ENCODE measurements at regions of chr10 and their contacts with region 1.

Region 1: GRCh38 chr10:128011175-128011979 is 104.5 kb downstream of the PTPRE start:
- DNase-seq: no peak
- H3K4me3 ChIP-seq: no peak overlapping the region
- CTCF ChIP-seq: peak; percentile 96

Region 2: GRCh38 chr10:127906548-127907377 is 104.6 kb before region 1 on chr10 and contains the start of gene PTPRE:
- CTCF ChIA-PET with region 1: interaction called, 24 read pairs
- POLR2A ChIA-PET with region 1: no interaction called
- DNase-seq: no peak
- H3K4me3 ChIP-seq: no peak within 1 kb of the TSS
- CTCF ChIP-seq: peak; percentile 44

Region 3: GRCh38 chr10:127990846-127991542 is 20.4 kb before region 1 on chr10:
- CTCF ChIA-PET with region 1: interaction called, 13 read pairs
- POLR2A ChIA-PET with region 1: no interaction called
- DNase-seq: peak; percentile 17
- H3K4me3 ChIP-seq: no peak overlapping the region
- CTCF ChIP-seq: no peak

Region 4: DNA sequence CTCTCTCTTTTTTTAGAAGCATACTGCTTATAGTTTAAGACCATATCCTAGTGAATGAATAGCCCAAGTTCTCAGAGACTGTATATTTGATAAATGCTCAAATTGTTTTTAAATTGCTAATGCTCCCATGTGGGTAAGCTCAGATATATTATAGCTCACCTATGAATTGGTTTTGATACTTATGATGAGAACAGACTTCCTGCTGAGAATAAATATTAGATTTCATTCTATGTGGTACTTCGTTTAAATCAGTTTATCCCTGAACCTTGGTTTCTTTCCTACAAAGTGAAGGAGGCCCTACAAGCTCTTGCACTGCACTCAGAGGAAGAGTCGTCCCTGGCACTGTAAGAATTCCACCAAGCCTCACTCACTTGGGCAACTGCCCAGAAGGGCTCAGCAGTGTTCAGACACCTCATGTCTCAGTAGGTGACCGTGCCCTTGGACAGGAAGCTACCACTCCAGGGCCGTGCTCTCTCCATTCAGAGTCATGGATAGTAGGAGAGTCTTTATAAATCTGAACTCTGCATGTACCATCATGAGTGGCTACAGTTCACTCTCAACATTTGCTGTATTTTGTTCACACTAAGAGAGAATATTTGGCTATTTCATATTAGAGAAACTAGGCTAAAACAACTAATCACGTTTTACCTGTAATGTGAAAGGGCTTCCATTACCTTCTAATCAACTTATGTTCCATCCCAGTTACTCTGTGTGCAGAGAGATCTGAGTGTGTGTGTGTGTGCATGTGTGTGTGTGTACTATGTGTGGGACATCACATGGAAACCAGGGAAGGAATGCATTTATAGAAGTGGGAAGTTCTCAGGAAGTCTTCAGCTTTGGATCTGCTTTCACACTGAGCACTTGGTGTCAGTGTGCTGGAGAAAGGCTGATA is 10.7 kb before region 1 on chr10:
- CTCF ChIA-PET with region 1: interaction called, 18 read pairs
- POLR2A ChIA-PET with region 1: interaction called, 3 read pairs
- DNase-seq: no peak
- H3K4me3 ChIP-seq: no peak overlapping the region
- CTCF ChIP-seq: no peak

Region 5: DNA sequence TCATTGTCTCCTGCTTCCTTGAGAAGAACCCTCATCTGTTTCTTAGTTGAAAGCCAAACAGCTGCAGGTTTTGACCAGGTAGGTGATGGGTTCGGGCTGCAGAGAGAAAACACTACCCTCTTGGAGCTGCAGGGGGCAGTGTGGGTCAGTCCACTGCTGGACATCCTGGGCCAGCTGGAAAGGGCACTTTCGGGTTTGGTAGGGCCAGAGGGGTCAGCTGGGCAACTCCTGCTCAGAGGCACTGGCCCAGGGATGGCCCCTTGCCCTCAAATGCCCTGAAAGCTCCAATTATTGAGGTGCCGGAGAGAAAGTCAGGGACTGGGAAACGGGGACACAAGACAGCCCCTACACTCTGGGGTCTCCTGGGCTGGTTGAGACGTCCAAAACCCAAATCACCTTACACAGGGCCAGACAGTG is 24.2 kb after region 1 on chr10:
- CTCF ChIA-PET with region 1: interaction called, 13 read pairs
- POLR2A ChIA-PET with region 1: no interaction called
- DNase-seq: no peak
- H3K4me3 ChIP-seq: no peak overlapping the region
- CTCF ChIP-seq: peak; percentile 75

Measured in AG04449 (cell line).